ENCODE measurements at regions of chr6 and their contacts with region 1.

Region 1: GRCh38 chr6:137094411-137095008 is 49.7 kb upstream of the IL20RA start:
- DNase-seq: peak; percentile 75
- H3K4me3 ChIP-seq: no peak overlapping the region
- H3K27ac ChIP-seq: no peak overlapping the region
- H3K4me1 ChIP-seq: no peaks in the 10 kb centered on the region
- H3K27me3 ChIP-seq: peaks cover 3 to 4% of the 10 kb centered on the region in 2 experiments
- CTCF ChIP-seq: peak; percentile 50 to 53
- POLR2A ChIP-seq: no peak

Region 2: GRCh38 chr6:136989571-136990241 is 104.8 kb before region 1 on chr6:
- CTCF ChIA-PET with region 1: no interaction called
- POLR2A ChIA-PET with region 1: no interaction called
- dilution Hi-C with region 1: no loop called
- intact Hi-C with region 1: no loop called
- DNase-seq: no peak
- H3K4me3 ChIP-seq: no peak overlapping the region
- H3K27ac ChIP-seq: no peak overlapping the region
- H3K4me1 ChIP-seq: peaks cover 3% of the 10 kb centered on the region
- H3K27me3 ChIP-seq: peaks cover 25 to 44% of the 10 kb centered on the region in 2 experiments
- CTCF ChIP-seq: no peak
- POLR2A ChIP-seq: no peak

Region 3: GRCh38 chr6:137076277-137077068 is 18.0 kb before region 1 on chr6:
- CTCF ChIA-PET with region 1: interaction called, 21 read pairs
- POLR2A ChIA-PET with region 1: no interaction called
- dilution Hi-C with region 1: no loop called
- intact Hi-C with region 1: no loop called
- DNase-seq: peak; percentile 60
- H3K4me3 ChIP-seq: no peak overlapping the region
- H3K27ac ChIP-seq: no peak overlapping the region
- H3K4me1 ChIP-seq: no peaks in the 10 kb centered on the region
- H3K27me3 ChIP-seq: peaks cover 2% of the 10 kb centered on the region in 2 experiments
- CTCF ChIP-seq: peak; percentile 67 to 76
- POLR2A ChIP-seq: no peak

Region 4: GRCh38 chr6:137323860-137324259 is 229.3 kb after region 1 on chr6:
- CTCF ChIA-PET with region 1: interaction called, 16 read pairs
- POLR2A ChIA-PET with region 1: no interaction called
- dilution Hi-C with region 1: no loop called
- intact Hi-C with region 1: no loop called
- DNase-seq: no peak
- H3K4me3 ChIP-seq: no peak overlapping the region
- H3K27ac ChIP-seq: no peak overlapping the region
- H3K4me1 ChIP-seq: no peaks in the 10 kb centered on the region
- H3K27me3 ChIP-seq: peaks cover 0 to 3% of the 10 kb centered on the region in 2 experiments
- CTCF ChIP-seq: no peak
- POLR2A ChIP-seq: no peak

Region 5: DNA sequence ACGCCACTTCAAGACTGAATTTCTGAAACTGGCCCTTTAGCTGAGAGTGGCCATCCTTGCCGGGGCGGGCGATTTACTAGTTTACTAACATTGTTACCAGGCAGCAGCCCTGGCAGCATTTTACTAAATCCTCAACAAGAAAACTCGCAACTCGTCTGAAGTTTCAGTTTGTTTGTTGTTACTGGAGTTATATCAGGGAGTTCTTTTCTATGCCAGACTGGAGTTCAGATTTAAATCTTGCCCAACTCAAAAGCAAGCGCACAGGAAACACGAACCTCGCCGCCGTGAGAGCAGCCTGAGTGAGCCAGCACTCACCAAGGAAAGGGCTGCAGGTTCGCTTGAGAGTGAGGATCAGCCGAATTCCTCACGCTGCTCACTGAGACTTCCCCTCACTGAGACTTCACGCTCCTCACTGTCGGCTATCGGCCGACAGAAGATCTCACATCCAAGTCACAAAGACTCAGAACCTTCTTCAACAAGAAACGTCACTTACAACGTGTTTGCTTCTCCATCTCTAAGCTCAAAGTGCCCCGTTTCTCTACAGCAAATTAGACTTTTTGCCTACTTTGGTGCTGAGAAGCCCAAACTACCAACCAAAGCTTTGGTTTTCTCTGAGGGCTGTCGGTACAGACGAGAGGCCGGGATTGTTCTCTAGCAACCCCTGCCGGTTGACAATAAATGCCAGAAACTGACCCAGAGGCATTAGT is 320.8 kb after region 1 on chr6:
- CTCF ChIA-PET with region 1: interaction called, 30 read pairs
- POLR2A ChIA-PET with region 1: no interaction called
- dilution Hi-C with region 1: no loop called
- intact Hi-C with region 1: loop called (anchors 1 kb)
- DNase-seq: peak; percentile 73
- H3K4me3 ChIP-seq: peak overlapping the region in 2 of 3 experiments; percentile 25 to 59
- H3K27ac ChIP-seq: no peak overlapping the region
- H3K4me1 ChIP-seq: no peaks in the 10 kb centered on the region
- H3K27me3 ChIP-seq: peaks cover 19 to 28% of the 10 kb centered on the region in 2 experiments
- CTCF ChIP-seq: peak; percentile 56 to 71
- POLR2A ChIP-seq: no peak

Region 6: GRCh38 chr6:137641474-137642077 is 547.1 kb after region 1 on chr6:
- CTCF ChIA-PET with region 1: interaction called, 56 read pairs
- POLR2A ChIA-PET with region 1: no interaction called
- dilution Hi-C with region 1: no loop called
- intact Hi-C with region 1: loop called (anchors 1 kb)
- DNase-seq: peak; percentile 70
- H3K4me3 ChIP-seq: no peak overlapping the region
- H3K27ac ChIP-seq: no peak overlapping the region
- H3K4me1 ChIP-seq: no peaks in the 10 kb centered on the region
- H3K27me3 ChIP-seq: peaks cover 0 to 3% of the 10 kb centered on the region in 2 experiments
- CTCF ChIP-seq: peak; percentile 55 to 58
- POLR2A ChIP-seq: no peak

Measured in endothelial cell of umbilical vein (primary cell).